ENCODE measurements at regions of chr7 and their contacts with region 1.

Region 1: DNA sequence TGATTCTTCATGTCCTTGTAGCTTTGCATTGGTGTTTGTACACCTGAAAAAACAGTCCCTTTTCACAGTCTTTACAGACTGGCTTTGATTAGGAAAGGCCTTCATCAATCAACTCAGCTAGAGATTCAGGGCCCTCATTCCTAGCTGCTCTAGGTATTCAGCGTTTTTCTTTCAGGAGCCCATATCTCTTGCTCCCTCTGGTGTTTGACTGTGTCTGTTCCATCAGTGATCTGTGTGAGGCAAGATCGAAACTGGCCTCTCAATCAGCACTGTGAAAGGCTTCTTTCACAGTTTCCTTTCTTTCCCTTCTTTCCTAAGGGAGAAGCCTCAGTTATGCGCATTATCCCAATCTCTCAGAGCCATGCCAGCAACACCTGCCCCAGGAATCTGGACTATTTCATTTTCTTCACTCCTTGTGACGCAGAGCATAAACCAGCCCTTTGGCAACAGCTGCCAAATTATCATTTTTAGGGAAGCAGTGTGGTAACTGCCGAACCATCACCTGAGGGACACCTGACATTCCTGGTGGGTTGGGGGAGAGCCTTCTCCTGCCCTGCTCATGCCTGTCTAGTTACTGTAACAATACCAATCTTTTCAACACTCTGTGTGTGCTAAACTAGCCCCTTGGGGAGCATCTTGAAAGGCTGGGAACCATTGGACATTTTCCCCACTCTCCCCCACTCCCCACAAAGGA is 75.7 kb upstream of the CCDC71L start:
- DNase-seq: no peak
- H3K4me3 ChIP-seq: peak overlapping the region in 1 of 4 donors; percentile 14
- H3K27ac ChIP-seq: no peak overlapping the region
- H3K4me1 ChIP-seq: peaks cover 0 to 7% (median 0%) of the 10 kb centered on the region in 4 donors
- H3K27me3 ChIP-seq: no peaks in the 10 kb centered on the region
- CTCF ChIP-seq: peak in 3 of 4 experiments; percentile 52 to 60 (median 59)
- EP300 ChIP-seq: no peak
- POLR2A ChIP-seq: no peak

Region 2: DNA sequence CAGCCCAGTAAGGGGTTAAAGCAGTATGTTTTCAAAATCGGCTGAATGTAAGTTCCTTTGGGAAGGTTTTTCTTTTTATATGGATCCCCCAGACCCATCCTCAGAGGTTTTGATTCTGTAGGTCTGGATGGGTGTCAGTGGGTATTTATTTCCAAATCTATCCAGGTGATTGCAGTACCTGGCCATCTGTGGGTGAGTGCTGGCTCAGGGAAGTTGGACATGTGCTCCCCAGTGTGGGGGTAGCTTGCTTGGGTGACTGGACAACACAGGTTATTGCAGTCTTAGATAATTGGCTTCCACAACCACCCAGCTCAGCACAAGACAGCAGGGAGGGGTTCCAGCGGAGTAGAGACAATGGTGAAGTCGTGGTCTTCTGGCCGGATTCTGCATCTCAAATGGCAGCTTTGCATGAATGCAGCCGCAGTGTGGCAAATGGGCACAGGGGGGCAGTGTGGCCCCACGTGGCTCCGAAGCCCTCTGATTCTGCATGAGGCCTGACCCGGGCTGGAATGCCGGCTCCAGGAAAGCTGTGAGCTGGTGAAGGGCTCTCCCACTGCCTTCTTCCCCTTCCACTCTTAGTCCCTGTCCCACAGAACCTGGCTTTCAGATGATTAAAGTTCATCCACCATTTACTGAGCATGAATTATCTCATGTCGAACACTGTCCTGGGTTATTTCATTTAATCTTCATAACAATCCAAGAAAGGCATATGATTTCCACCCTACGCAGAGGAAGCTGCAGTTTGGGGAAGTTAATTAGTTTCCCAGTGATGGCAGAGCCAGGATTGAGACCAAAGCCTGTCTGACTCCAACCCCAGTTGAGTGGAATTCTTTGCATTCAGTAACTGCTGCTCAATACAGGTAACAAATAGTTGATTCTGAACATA is 560.0 kb before region 1 on chr7:
- intact Hi-C with region 1: loop called (anchors 5 kb)
- DNase-seq: peak; percentile 90
- H3K4me3 ChIP-seq: no peak overlapping the region
- H3K27ac ChIP-seq: no peak overlapping the region
- H3K4me1 ChIP-seq: peaks cover 0 to 9% (median 5%) of the 10 kb centered on the region in 4 donors
- H3K27me3 ChIP-seq: no peaks in the 10 kb centered on the region
- CTCF ChIP-seq: peak; percentile 90 to 95 (median 92)
- EP300 ChIP-seq: no peak
- POLR2A ChIP-seq: no peak

Region 3: GRCh38 chr7:106461993-106462859 is 274.4 kb before region 1 on chr7:
- intact Hi-C with region 1: loop called (anchors 5 kb)
- DNase-seq: no peak
- H3K4me3 ChIP-seq: no peak overlapping the region
- H3K27ac ChIP-seq: no peak overlapping the region
- H3K4me1 ChIP-seq: peaks cover 0 to 10% (median 3%) of the 10 kb centered on the region in 4 donors
- H3K27me3 ChIP-seq: no peaks in the 10 kb centered on the region
- CTCF ChIP-seq: peak in 3 of 4 experiments; percentile 57 to 72 (median 70)
- EP300 ChIP-seq: no peak
- POLR2A ChIP-seq: no peak

Region 4: GRCh38 chr7:106476751-106477150 is 259.9 kb before region 1 on chr7:
- intact Hi-C with region 1: no loop called
- DNase-seq: no peak
- H3K4me3 ChIP-seq: no peak overlapping the region
- H3K27ac ChIP-seq: no peak overlapping the region
- H3K4me1 ChIP-seq: no peaks in the 10 kb centered on the region
- H3K27me3 ChIP-seq: no peaks in the 10 kb centered on the region
- CTCF ChIP-seq: no peak
- EP300 ChIP-seq: no peak
- POLR2A ChIP-seq: no peak

Region 5: DNA sequence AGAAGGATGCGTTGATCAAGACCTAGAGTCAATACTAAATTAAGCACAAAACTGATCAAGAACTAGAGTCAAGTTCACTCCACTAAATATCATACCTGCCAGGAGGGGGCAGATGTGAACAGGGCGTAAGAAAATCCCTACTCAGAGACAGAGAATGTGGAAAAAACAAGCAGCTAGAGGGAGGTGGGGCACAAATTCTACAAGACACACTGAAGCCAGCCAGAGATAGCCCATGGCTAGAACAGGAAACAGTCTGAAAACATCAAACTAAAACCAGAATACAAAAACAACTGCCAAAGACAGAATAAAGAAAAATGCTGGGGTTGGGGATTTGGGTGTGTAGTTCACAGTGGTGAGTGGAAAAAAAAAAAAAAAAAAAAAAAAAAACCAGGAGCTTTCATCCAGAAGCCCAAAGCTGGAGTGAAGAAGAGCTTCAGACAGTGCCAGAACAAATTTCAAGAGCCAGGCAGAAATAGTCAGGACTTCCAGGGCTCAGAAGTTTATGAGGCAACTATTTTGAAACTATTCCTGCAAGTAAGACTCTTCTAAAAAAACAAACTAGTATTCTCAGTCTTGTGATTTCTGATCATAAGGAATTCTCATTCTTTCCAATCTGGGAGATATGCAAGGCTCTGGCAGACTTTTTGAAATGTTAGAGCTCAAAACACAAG is 194.0 kb before region 1 on chr7:
- intact Hi-C with region 1: loop called (anchors 2 kb)
- DNase-seq: peak; percentile 75
- H3K4me3 ChIP-seq: no peak overlapping the region
- H3K27ac ChIP-seq: peak overlapping the region; percentile 65 to 80 (median 68)
- H3K4me1 ChIP-seq: peaks cover 0 to 34% (median 27%) of the 10 kb centered on the region in 4 donors
- H3K27me3 ChIP-seq: no peaks in the 10 kb centered on the region
- CTCF ChIP-seq: peak in 3 of 4 experiments; percentile 31 to 72 (median 51)
- EP300 ChIP-seq: peak in 1 of 4 donors; percentile 23
- POLR2A ChIP-seq: no peak

Measured in sigmoid colon (tissue), 7 donors.